Right ventricle myocardium superior (tissue), 1 donor: ENCODE measurements at regions of chr4 and their contacts with region 1.

Region 1: GRCh38 chr4:23438764-23439163 is 451.1 kb downstream of the PPARGC1A start:
- DNase-seq: no peak
- ATAC-seq: no peak

Region 2: DNA sequence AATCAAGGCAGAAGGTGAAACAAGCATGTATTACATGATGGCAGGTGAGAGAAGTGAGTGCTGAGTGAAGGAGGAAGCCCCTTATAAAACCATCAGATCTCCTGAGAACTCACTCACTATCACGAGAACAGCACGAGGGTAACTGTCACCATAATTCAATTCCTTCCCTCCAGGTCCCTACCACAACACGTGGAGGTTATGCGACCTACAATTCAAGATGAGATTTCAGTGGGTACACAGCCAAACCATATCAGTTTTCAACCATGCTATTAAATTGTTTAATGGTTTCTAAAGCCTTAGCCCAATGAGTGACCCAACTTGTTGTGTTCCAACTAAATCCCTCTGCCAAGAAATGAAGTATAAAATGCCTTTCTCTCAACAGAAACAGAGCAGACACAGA is 226.2 kb before region 1 on chr4:
- intact Hi-C with region 1: no loop called
- DNase-seq: no peak
- ATAC-seq: no peak

Region 3: GRCh38 chr4:23455456-23456158 is 16.8 kb after region 1 on chr4:
- intact Hi-C with region 1: loop called (anchors 2 kb)
- DNase-seq: no peak
- ATAC-seq: peak; percentile 90